ENCODE measurements at regions of chr9 and their contacts with region 1.

Region 1: DNA sequence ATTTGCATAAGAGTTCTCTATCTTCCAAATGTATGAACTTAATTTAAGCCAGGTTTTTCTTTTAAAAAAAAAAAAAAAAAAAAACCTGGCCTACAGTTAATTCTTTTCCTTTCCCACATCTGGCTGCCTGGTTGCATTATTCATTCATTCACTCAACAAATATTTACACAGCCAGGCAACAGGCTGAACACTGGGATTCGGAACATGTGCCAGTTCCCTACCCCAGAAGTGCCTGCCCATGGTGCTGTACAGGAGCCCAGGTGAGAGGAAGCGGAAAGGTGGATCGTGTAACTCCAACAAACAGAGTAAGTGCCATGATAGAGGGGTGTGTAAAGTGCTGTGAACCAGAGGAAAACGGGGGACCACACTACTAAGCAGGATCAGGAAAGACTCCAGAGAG is 93.6 kb downstream of the CDK5RAP2 start:
- DNase-seq: no peak
- H3K4me3 ChIP-seq: no peak overlapping the region
- H3K27ac ChIP-seq: no peak overlapping the region
- H3K4me1 ChIP-seq: no peaks in the 10 kb centered on the region
- H3K27me3 ChIP-seq: no peaks in the 10 kb centered on the region
- CTCF ChIP-seq: no peak
- EP300 ChIP-seq: no peak
- POLR2A ChIP-seq: no peak

Region 2: GRCh38 chr9:119986213-119986612 is 500.1 kb before region 1 on chr9:
- in situ Hi-C with region 1: no loop called
- intact Hi-C with region 1: no loop called
- DNase-seq: no peak
- H3K4me3 ChIP-seq: no peak overlapping the region
- H3K27ac ChIP-seq: no peak overlapping the region
- H3K4me1 ChIP-seq: no peaks in the 10 kb centered on the region
- H3K27me3 ChIP-seq: no peaks in the 10 kb centered on the region
- CTCF ChIP-seq: no peak
- EP300 ChIP-seq: no peak
- POLR2A ChIP-seq: no peak

Region 3: GRCh38 chr9:120513825-120514396 is 27.6 kb after region 1 on chr9:
- in situ Hi-C with region 1: no loop called
- intact Hi-C with region 1: no loop called
- DNase-seq: no peak
- H3K4me3 ChIP-seq: no peak overlapping the region
- H3K27ac ChIP-seq: no peak overlapping the region
- H3K4me1 ChIP-seq: no peaks in the 10 kb centered on the region
- H3K27me3 ChIP-seq: no peaks in the 10 kb centered on the region
- CTCF ChIP-seq: no peak
- EP300 ChIP-seq: no peak
- POLR2A ChIP-seq: no peak

Region 4: GRCh38 chr9:120545701-120546550 is 59.6 kb after region 1 on chr9:
- in situ Hi-C with region 1: no loop called
- intact Hi-C with region 1: no loop called
- DNase-seq: no peak
- H3K4me3 ChIP-seq: no peak overlapping the region
- H3K27ac ChIP-seq: no peak overlapping the region
- H3K4me1 ChIP-seq: no peaks in the 10 kb centered on the region
- H3K27me3 ChIP-seq: no peaks in the 10 kb centered on the region
- CTCF ChIP-seq: no peak
- EP300 ChIP-seq: no peak
- POLR2A ChIP-seq: no peak

Region 5: GRCh38 chr9:120714088-120714845 is 227.9 kb after region 1 on chr9 and contains the start of gene MEGF9:
- in situ Hi-C with region 1: no loop called
- intact Hi-C with region 1: loop called (anchors 5 kb)
- DNase-seq: peak; percentile 98
- H3K4me3 ChIP-seq: peak within 1 kb of the TSS; percentile 64 to 98 (median 82)
- H3K27ac ChIP-seq: peak within 1 kb of the TSS; percentile 82 to 89 (median 86)
- H3K4me1 ChIP-seq: peaks cover 15 to 45% (median 28%) of the 10 kb centered on the region in 4 donors
- H3K27me3 ChIP-seq: no peaks in the 10 kb centered on the region
- CTCF ChIP-seq: no peak
- EP300 ChIP-seq: no peak
- POLR2A ChIP-seq: peak; percentile 69
- total RNA-seq, gene MEGF9: 6.7 to 17.9 (median 12.7) TPM